T-cell (primary cell): ENCODE measurements at regions of chrX and their contacts with region 1.

Region 1: DNA sequence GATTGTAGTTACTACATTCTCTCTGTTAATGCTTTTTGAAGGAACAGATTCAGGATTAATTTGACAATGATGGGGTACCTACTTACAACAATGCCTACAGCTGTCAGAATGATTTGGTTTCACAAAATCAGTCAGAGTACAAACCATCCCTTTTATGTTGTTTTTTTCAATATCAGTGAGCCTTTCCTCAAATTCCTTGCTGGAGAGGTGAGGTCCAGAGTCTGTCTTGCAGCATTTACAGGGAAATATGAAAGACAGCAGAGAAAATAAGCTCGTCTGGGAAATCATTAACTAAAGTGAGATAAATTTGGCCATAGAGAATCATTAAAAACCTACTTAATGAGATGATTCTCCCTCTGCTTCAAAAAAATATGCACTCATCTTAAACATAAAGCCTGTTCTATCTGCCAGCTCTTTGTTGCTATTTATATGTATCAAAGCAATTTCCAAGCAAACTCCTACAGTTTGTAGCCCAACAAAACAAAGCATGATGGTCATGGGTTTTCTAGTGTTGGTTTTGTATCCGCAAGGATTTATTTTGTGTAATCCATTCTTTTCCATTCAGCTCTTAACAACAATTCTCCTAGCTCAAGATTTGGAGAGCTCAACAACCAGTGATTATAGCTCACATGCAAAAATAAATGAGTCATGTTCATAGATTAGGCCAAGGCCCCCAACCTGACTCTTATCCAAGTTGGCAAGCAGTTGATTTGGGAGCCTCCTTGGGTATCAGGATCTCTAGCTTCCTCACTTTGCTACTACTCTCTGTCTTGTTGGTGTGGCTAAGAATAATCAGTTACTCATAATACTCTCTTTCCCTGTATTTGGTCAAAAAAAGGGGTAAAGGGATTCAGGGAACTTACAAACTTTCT is 222.6 kb downstream of the ENOX2 start:
- DNase-seq: no peak
- ATAC-seq: no peak
- H3K4me3 ChIP-seq: no peak overlapping the region
- H3K4me3 Mint-ChIP-seq: no peak overlapping the region
- H3K27ac ChIP-seq: no peak overlapping the region
- H3K27ac Mint-ChIP-seq: no peak overlapping the region
- H3K4me1 ChIP-seq: no peaks in the 10 kb centered on the region
- H3K4me1 Mint-ChIP-seq: no peaks in the 10 kb centered on the region
- H3K27me3 ChIP-seq: no peaks in the 10 kb centered on the region
- H3K27me3 Mint-ChIP-seq: peaks cover 0 to under 1% of the 10 kb centered on the region in 2 donors

Region 2: GRCh38 chrX:130669233-130669632 is 11.2 kb before region 1 on chrX:
- CTCF ChIA-PET with region 1: interaction called in 1 of 2 experiments, 4 read pairs
- POLR2A ChIA-PET with region 1: interaction called in 1 of 2 experiments, 14 read pairs
- DNase-seq: no peak
- ATAC-seq: no peak
- H3K4me3 ChIP-seq: no peak overlapping the region
- H3K4me3 Mint-ChIP-seq: no peak overlapping the region
- H3K27ac ChIP-seq: no peak overlapping the region
- H3K27ac Mint-ChIP-seq: no peak overlapping the region
- H3K4me1 ChIP-seq: no peaks in the 10 kb centered on the region
- H3K4me1 Mint-ChIP-seq: no peaks in the 10 kb centered on the region
- H3K27me3 ChIP-seq: no peaks in the 10 kb centered on the region
- H3K27me3 Mint-ChIP-seq: no peaks in the 10 kb centered on the region